A549 (cell line): ENCODE measurements at regions of chr15 and their contacts with region 1.

Region 1: DNA sequence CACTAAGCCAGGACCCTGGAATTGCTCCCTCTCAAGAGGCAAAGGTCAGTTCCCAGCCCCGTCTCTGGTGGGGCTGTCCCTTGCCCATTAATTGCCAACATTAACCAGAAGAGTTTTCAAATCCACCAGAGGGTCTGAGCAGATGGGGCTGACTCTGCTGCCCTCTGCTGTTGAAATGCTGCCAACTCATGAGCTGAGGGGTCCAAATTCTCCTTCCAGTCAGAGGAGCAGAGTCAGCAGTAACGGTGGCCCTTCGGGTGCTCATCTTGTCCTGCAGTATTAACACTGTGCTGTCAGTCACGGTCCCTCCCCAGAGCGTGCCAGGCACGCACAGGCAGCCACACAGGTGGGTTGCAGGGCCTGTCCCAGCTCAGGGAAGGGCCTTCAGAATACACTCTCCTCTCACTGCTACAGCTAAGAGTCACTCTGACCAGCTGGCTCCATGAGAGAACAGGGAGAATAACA is 10.7 kb upstream of the SPTBN5 start:
- DNase-seq: peak; percentile 58 to 80
- ATAC-seq: peak; percentile 91 to 95
- H3K4me3 ChIP-seq: no peak overlapping the region
- H3K27ac ChIP-seq: 0 out of 6 replicates have a peak overlapping the region, but pooled peaks of 1 of the 2 experiments have one; percentile 41
- H3K4me1 ChIP-seq: 0 out of 3 replicates have a peak, but pooled peaks cover 5% of the 10 kb centered on the region
- CTCF ChIP-seq: peak; percentile 71
- EP300 ChIP-seq: no peak
- POLR2A ChIP-seq: no peak
- RAD21 ChIP-seq: peak; percentile 75 to 77

Region 2: GRCh38 chr15:41703120-41703519 is 201.5 kb before region 1 on chr15:
- CTCF ChIA-PET with region 1: no interaction called
- POLR2A ChIA-PET with region 1: no interaction called
- DNase-seq: no peak
- ATAC-seq: no peak
- H3K4me3 ChIP-seq: no peak overlapping the region
- H3K27ac ChIP-seq: no peak overlapping the region
- H3K4me1 ChIP-seq: no peaks in the 10 kb centered on the region
- CTCF ChIP-seq: no peak
- EP300 ChIP-seq: no peak
- POLR2A ChIP-seq: no peak
- RAD21 ChIP-seq: no peak

Region 3: GRCh38 chr15:41774062-41774881 is 130.3 kb before region 1 on chr15 and contains the start of gene MAPKBP1:
- CTCF ChIA-PET with region 1: interaction called, 17 read pairs
- POLR2A ChIA-PET with region 1: interaction called, 3 read pairs
- DNase-seq: peak; percentile 89 to 95
- ATAC-seq: peak; percentile 90 to 95
- H3K4me3 ChIP-seq: peak within 1 kb of the TSS; percentile 76
- H3K27ac ChIP-seq: peak within 1 kb of the TSS; percentile 81 to 96
- H3K4me1 ChIP-seq: peaks cover 22% of the 10 kb centered on the region; the same call in 2 of the 3 replicates
- CTCF ChIP-seq: peak; percentile 58
- EP300 ChIP-seq: no peak
- POLR2A ChIP-seq: peak; percentile 60
- RAD21 ChIP-seq: peak; percentile 41 to 47; a peak in 3 of 5 replicates
- polyA plus RNA-seq, gene MAPKBP1: 2.5 and 4.3 TPM in 2 replicates

Region 4: DNA sequence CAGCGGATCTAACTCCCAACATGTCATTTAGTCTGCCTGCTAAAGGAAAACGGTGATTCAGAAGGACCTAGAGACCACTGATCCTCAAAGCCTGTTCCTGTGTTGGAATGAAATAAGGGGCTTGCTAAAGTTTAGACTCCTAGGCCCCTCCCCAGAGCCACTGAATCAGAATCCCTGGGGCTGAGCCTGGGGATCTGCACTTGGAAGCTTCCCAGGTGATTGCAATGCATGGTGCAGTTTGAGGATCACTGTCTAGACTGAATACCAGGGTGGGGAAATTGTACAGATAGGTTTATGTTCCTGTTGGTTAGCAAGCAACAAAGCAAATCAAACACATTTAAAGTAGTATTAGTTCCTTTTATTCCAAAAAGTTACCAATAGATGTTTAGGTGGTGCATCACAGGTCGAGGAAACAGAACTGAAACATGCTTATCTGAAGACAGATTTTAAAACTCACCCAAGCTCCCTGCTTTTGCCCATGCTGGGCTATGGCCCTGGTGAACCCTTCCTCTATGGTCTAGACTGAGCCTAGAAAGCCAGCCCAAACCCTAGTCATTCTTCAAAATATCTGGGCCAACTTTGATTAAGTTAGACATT is 18.9 kb after region 1 on chr15:
- CTCF ChIA-PET with region 1: interaction called, 15 read pairs
- POLR2A ChIA-PET with region 1: no interaction called
- DNase-seq: no peak
- ATAC-seq: no peak
- H3K4me3 ChIP-seq: no peak overlapping the region
- H3K27ac ChIP-seq: no peak overlapping the region; a peak in 1 of 6 replicates
- H3K4me1 ChIP-seq: peaks cover 63% of the 10 kb centered on the region
- CTCF ChIP-seq: no peak
- EP300 ChIP-seq: no peak
- POLR2A ChIP-seq: no peak
- RAD21 ChIP-seq: no peak

Region 5: GRCh38 chr15:41944313-41944940 is 39.9 kb after region 1 on chr15:
- CTCF ChIA-PET with region 1: no interaction called
- POLR2A ChIA-PET with region 1: no interaction called
- DNase-seq: peak in 1 of 2 experiments; percentile 49
- ATAC-seq: peak; percentile 87 to 94
- H3K4me3 ChIP-seq: no peak overlapping the region
- H3K27ac ChIP-seq: peak overlapping the region; percentile 59 to 83
- H3K4me1 ChIP-seq: peaks cover 42% of the 10 kb centered on the region
- CTCF ChIP-seq: no peak
- EP300 ChIP-seq: no peak
- POLR2A ChIP-seq: no peak
- RAD21 ChIP-seq: no peak